K562 (cell line): ENCODE measurements at regions of chr15 and their contacts with region 1.

Region 1: GRCh38 chr15:64731012-64731806 is 44.2 kb downstream of the RBPMS2 start:
- DNase-seq: peak; percentile 70 to 86 (median 76)
- ATAC-seq: peak; percentile 91
- H3K4me3 ChIP-seq: no peak overlapping the region
- H3K27ac ChIP-seq: no peak overlapping the region
- H3K4me1 ChIP-seq: no peaks in the 10 kb centered on the region; a peak in 2 of 5 replicates
- H3K27me3 ChIP-seq: peaks cover 8 to 22% of the 10 kb centered on the region in 2 experiments; a peak in 2 of 5 replicates
- CTCF ChIP-seq: peak; percentile 93 to 96 (median 94)
- EP300 ChIP-seq: no peak
- POLR2A ChIP-seq: no peak
- RAD21 ChIP-seq: peak; percentile 92 to 97

Region 2: GRCh38 chr15:64430000-64430735 is 301.0 kb before region 1 on chr15:
- CTCF ChIA-PET with region 1: no interaction called
- POLR2A ChIA-PET with region 1: no interaction called
- in situ Hi-C with region 1: no loop called
- intact Hi-C with region 1: loop called (anchors 5 kb)
- DNase-seq: peak in 3 of 4 experiments; percentile 22 to 80 (median 62)
- ATAC-seq: peak; percentile 93
- H3K4me3 ChIP-seq: no peak overlapping the region
- H3K27ac ChIP-seq: peak overlapping the region; percentile 24; the same call in 1 of the 3 replicates
- H3K4me1 ChIP-seq: peaks cover 3 to 19% of the 10 kb centered on the region in 2 experiments; a peak in 3 of 5 replicates
- H3K27me3 ChIP-seq: no peaks in the 10 kb centered on the region
- CTCF ChIP-seq: no peak
- EP300 ChIP-seq: peak; percentile 88
- POLR2A ChIP-seq: no peak
- RAD21 ChIP-seq: no peak

Region 3: DNA sequence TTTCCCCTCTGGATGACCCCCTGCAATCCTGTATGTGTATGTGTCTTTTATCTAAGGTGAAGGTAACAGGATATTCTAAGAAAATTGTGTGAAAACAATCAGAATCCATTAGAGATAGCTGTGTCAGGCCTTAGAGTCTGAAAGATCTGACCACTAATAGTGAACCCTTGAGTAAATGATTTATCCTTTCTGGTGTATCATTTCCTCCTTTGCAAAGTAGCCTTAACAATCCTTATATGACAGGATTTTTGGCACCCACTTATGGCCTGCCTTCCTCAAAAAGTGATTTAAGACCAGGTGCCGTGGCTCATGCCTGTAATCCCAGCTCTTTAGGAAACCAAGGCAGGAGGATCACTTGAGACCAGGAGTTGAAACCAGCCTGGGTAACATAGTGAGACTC is 66.0 kb before region 1 on chr15:
- CTCF ChIA-PET with region 1: no interaction called
- POLR2A ChIA-PET with region 1: no interaction called
- in situ Hi-C with region 1: no loop called
- intact Hi-C with region 1: no loop called
- DNase-seq: no peak
- ATAC-seq: no peak
- H3K4me3 ChIP-seq: no peak overlapping the region
- H3K27ac ChIP-seq: no peak overlapping the region
- H3K4me1 ChIP-seq: no peaks in the 10 kb centered on the region
- H3K27me3 ChIP-seq: no peaks in the 10 kb centered on the region
- CTCF ChIP-seq: no peak
- EP300 ChIP-seq: no peak
- POLR2A ChIP-seq: no peak
- RAD21 ChIP-seq: no peak

Region 4: GRCh38 chr15:64809649-64810496 is 78.7 kb after region 1 on chr15:
- CTCF ChIA-PET with region 1: interaction called, 11 read pairs
- POLR2A ChIA-PET with region 1: no interaction called
- in situ Hi-C with region 1: loop called (anchors 5 kb)
- intact Hi-C with region 1: loop called (anchors 2 kb)
- DNase-seq: peak; percentile 84 to 90 (median 88)
- ATAC-seq: peak; percentile 91
- H3K4me3 ChIP-seq: no peak overlapping the region
- H3K27ac ChIP-seq: no peak overlapping the region
- H3K4me1 ChIP-seq: peaks cover 13% of the 10 kb centered on the region in 2 experiments
- H3K27me3 ChIP-seq: peaks cover 3 to 7% of the 10 kb centered on the region in 2 experiments; a peak in 2 of 5 replicates
- CTCF ChIP-seq: peak; percentile 91 to 96 (median 93)
- EP300 ChIP-seq: no peak
- POLR2A ChIP-seq: no peak
- RAD21 ChIP-seq: peak; percentile 75 to 90

Region 5: GRCh38 chr15:65032801-65033537 is 301.8 kb after region 1 on chr15:
- CTCF ChIA-PET with region 1: interaction called, 5 read pairs
- POLR2A ChIA-PET with region 1: no interaction called
- in situ Hi-C with region 1: loop called (anchors 10 kb)
- intact Hi-C with region 1: no loop called
- DNase-seq: peak; percentile 48 to 72 (median 52)
- ATAC-seq: peak; percentile 77
- H3K4me3 ChIP-seq: no peak overlapping the region
- H3K27ac ChIP-seq: no peak overlapping the region
- H3K4me1 ChIP-seq: peaks cover 7 to 13% of the 10 kb centered on the region in 2 experiments; a peak in 4 of 5 replicates
- H3K27me3 ChIP-seq: no peaks in the 10 kb centered on the region
- CTCF ChIP-seq: peak; percentile 78 to 86 (median 80)
- EP300 ChIP-seq: no peak
- POLR2A ChIP-seq: no peak
- RAD21 ChIP-seq: peak; percentile 45 to 77